Heart right ventricle (tissue), 16 donors: ENCODE measurements at regions of chr5 and their contacts with region 1.

Region 1: DNA sequence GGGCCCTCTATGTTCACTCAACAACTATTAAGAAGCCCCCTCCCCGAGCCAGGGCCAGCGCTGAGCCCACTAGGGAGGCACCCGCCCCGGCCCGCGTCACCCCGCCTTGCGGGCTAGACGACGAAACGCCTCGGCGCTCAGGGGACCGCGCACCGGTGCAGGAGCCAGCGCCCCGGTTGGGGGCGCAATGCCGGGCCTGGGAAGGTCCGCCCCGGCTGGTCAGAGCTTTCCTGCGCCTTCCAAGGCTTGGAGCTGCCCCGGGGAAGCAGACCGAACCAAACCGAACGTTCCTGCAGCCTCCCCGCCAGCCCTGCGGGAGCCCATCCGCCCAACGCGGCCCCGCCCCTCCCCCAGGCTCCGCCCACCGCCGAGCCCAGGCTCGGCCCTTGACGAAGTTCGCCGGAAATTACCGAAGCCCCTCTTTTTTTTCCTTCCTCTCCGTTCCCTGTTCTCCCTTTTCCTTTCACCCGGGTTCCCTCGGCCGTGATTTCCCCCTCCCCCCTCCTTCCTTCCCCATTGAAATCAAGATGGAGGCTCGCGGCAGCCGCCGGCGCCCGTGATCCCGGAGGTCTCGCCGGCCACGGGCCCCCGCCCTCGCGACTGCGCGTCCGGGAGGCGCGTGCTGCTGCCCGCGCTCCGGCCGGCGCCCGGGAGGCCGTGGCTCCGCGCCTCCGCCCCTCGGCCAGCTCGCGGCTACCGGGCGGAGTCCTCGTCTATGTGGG is at the start of gene TRIO:
- DNase-seq: peak; percentile 93 to 94
- ATAC-seq: peak; percentile 84 to 92 (median 89)
- H3K4me3 ChIP-seq: peak within 1 kb of the TSS; percentile 76 to 96 (median 92)
- H3K27ac ChIP-seq: peak within 1 kb of the TSS; percentile 89 to 98 (median 94)
- H3K4me1 ChIP-seq: peaks cover 5 to 39% (median 37%) of the 10 kb centered on the region in 9 donors
- H3K27me3 ChIP-seq: no peaks in the 10 kb centered on the region
- CTCF ChIP-seq: peak; percentile 23 to 84 (median 57)
- total RNA-seq, gene TRIO: 47.2 to 71.4 (median 61.9) TPM

Region 2: DNA sequence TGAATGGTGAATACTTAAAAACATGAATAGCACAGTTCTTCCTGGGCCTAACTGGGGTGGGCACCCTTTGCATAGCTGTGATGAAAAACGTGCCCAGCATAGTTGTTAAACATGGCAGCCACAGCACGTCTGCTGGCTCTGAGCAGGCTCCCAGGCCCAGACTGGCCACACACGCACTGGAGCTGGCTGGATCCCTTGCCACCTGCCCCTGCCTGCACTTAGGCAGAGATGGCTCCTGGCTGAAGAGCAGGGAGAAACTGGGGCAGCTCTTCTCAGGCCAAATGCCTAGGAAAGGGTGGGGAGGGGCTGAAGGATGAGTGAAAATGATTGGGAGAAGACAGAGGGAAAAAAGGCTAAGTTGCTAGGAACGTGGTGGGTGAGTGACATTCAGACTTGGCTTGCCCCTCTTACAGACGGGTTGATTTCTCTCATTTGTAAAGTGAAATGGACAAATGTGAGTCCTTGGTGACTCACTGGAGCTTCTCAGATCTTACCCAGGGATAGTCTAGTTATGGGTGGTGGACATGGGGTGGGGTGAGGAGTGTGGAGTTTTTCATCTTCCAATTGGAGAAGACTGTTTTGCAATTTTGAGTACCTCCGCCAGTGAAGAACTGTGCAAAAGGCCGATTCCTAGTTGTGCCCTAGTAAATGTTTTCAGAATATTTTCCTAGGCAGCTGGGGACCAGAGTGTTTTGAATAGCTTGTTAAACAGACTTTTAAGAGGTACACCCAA is 42.5 kb after region 1 on chr5:
- intact Hi-C with region 1: loop called in 6 of 10 experiments (anchors 5 kb)
- DNase-seq: peak in 1 of 2 donors; percentile 25
- ATAC-seq: peak in 7 of 8 donors; percentile 26 to 71 (median 52)
- H3K4me3 ChIP-seq: no peak overlapping the region
- H3K27ac ChIP-seq: peak overlapping the region; percentile 12 to 79 (median 50)
- H3K4me1 ChIP-seq: peaks cover 32 to 99% (median 82%) of the 10 kb centered on the region in 9 donors
- H3K27me3 ChIP-seq: no peaks in the 10 kb centered on the region
- CTCF ChIP-seq: no peak

Region 3: DNA sequence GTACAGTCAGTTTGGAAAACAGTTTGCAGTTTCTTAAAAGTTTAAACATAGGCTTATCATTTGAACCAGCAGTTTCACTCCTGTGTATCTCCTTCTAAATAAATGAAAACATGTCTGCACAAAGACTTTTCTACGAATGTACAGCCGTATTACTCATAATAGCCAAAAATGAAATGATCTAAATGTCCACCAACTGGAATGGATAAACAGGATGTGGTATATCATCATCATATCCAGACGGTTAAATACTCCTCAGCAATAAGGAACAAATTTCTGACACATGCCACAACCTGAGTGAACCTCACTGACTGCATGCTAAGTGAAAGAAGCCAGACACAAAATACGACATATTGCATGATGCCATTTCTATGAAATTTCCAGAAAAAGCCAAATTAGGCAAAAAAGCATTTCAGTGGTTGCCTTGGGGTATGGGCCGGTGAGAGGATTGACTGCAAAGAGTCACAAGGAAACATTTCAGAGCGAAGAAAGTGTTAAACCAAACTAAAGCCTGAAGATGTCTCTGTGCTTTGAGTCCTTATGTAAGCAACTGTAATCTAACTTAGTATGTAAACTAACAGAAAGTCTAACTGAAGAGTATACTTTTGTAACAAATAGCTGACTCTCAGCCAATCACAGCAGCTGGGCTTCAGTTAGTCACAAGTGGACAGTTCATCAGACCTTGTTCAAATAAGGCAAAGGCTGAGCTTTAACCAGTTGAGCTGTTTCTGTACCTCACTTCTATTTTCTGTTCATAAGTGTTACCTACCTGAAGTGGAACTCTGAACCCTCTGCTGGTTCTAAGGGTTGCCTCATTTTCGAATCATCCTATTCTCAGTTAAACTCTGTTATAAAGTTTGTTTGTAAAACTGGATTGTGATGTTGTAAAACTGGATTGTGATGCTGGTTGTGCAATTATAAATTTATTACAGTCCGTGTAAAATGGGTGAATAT is 65.4 kb after region 1 on chr5:
- intact Hi-C with region 1: loop called in 2 of 10 experiments (anchors 10 kb)
- DNase-seq: no peak
- ATAC-seq: peak in 3 of 8 donors; percentile 24 to 34 (median 32)
- H3K4me3 ChIP-seq: no peak overlapping the region
- H3K27ac ChIP-seq: peak overlapping the region in 1 of 10 donors; percentile 51
- H3K4me1 ChIP-seq: peaks cover 0 to 87% (median 64%) of the 10 kb centered on the region in 9 donors
- H3K27me3 ChIP-seq: no peaks in the 10 kb centered on the region
- CTCF ChIP-seq: no peak

Region 4: GRCh38 chr5:14258840-14259239 is 115.9 kb after region 1 on chr5:
- intact Hi-C with region 1: loop called in 2 of 10 experiments (anchors 5 to 10 kb)
- DNase-seq: peak in 1 of 2 donors; percentile 46
- ATAC-seq: peak; percentile 32 to 70 (median 60)
- H3K4me3 ChIP-seq: peak overlapping the region in 1 of 10 donors; percentile 19
- H3K27ac ChIP-seq: peak overlapping the region in 5 of 10 donors; percentile 38 to 73 (median 65)
- H3K4me1 ChIP-seq: peaks cover 0 to 85% (median 54%) of the 10 kb centered on the region in 9 donors
- H3K27me3 ChIP-seq: no peaks in the 10 kb centered on the region
- CTCF ChIP-seq: peak in 5 of 9 donors; percentile 13 to 47 (median 36)

Region 5: GRCh38 chr5:14264604-14265316 is 121.8 kb after region 1 on chr5:
- intact Hi-C with region 1: loop called in 7 of 10 experiments (anchors 2 to 10 kb)
- DNase-seq: peak; percentile 88 to 92
- ATAC-seq: peak; percentile 85 to 97 (median 94)
- H3K4me3 ChIP-seq: peak overlapping the region in 7 of 10 donors; percentile 24 to 47 (median 30)
- H3K27ac ChIP-seq: peak overlapping the region in 3 of 10 donors; percentile 1 to 25 (median 10)
- H3K4me1 ChIP-seq: peaks cover 14 to 82% (median 60%) of the 10 kb centered on the region in 9 donors
- H3K27me3 ChIP-seq: no peaks in the 10 kb centered on the region
- CTCF ChIP-seq: no peak

Region 6: GRCh38 chr5:14270209-14270702 is 127.3 kb after region 1 on chr5:
- intact Hi-C with region 1: loop called in 6 of 10 experiments (anchors 2 to 10 kb)
- DNase-seq: peak in 1 of 2 donors; percentile 79
- ATAC-seq: peak; percentile 90 to 96 (median 95)
- H3K4me3 ChIP-seq: no peak overlapping the region
- H3K27ac ChIP-seq: peak overlapping the region in 9 of 10 donors; percentile 38 to 84 (median 68)
- H3K4me1 ChIP-seq: peaks cover 18 to 71% (median 51%) of the 10 kb centered on the region in 9 donors
- H3K27me3 ChIP-seq: no peaks in the 10 kb centered on the region
- CTCF ChIP-seq: peak; percentile 64 to 92 (median 83)